ENCODE measurements at regions of chr12 and their contacts with region 1.

Region 1: GRCh38 chr12:12376646-12377448 is 20.0 kb downstream of the BORCS5 start:
- DNase-seq: peak in 7 of 9 donors; percentile 58 to 84 (median 72)
- ATAC-seq: peak; percentile 63
- H3K4me3 ChIP-seq: no peak overlapping the region
- H3K4me3 Mint-ChIP-seq: no peak overlapping the region
- H3K27ac ChIP-seq: no peak overlapping the region
- H3K27ac Mint-ChIP-seq: peak overlapping the region in 6 of 9 donors; percentile 46 to 86 (median 66)
- H3K4me1 ChIP-seq: peaks cover 14 to 42% of the 10 kb centered on the region in 2 donors
- H3K4me1 Mint-ChIP-seq: peaks cover 7 to 50% (median 44%) of the 10 kb centered on the region in 7 donors
- H3K27me3 ChIP-seq: no peaks in the 10 kb centered on the region
- H3K27me3 Mint-ChIP-seq: no peaks in the 10 kb centered on the region

Region 2: GRCh38 chr12:12474931-12475795 is 98.3 kb after region 1 on chr12:
- CTCF ChIA-PET with region 1: interaction called, 4 read pairs
- POLR2A ChIA-PET with region 1: interaction called, 5 read pairs
- intact Hi-C with region 1: loop called (anchors 1 to 2 kb)
- DNase-seq: peak in 3 of 9 donors; percentile 22 to 49 (median 37)
- ATAC-seq: peak; percentile 84
- H3K4me3 ChIP-seq: peak overlapping the region; percentile 7
- H3K4me3 Mint-ChIP-seq: peak overlapping the region in 9 of 10 donors; percentile 11 to 76 (median 43)
- H3K27ac ChIP-seq: peak overlapping the region; percentile 39
- H3K27ac Mint-ChIP-seq: peak overlapping the region; percentile 72 to 95 (median 91)
- H3K4me1 ChIP-seq: peaks cover 7 to 17% of the 10 kb centered on the region in 2 donors
- H3K4me1 Mint-ChIP-seq: peaks cover 10 to 72% (median 42%) of the 10 kb centered on the region in 7 donors
- H3K27me3 ChIP-seq: no peaks in the 10 kb centered on the region
- H3K27me3 Mint-ChIP-seq: no peaks in the 10 kb centered on the region

Region 3: GRCh38 chr12:12611512-12612306 is 234.9 kb after region 1 on chr12 and contains the start of gene CREBL2:
- CTCF ChIA-PET with region 1: interaction called, 4 read pairs
- POLR2A ChIA-PET with region 1: interaction called, 7 read pairs
- intact Hi-C with region 1: loop called in 1 of 2 experiments (anchors 1 kb)
- DNase-seq: peak; percentile 61 to 91 (median 89)
- ATAC-seq: peak; percentile 97
- H3K4me3 ChIP-seq: peak within 1 kb of the TSS; percentile 94
- H3K4me3 Mint-ChIP-seq: peak within 1 kb of the TSS; percentile 84 to 99 (median 93)
- H3K27ac ChIP-seq: peak within 1 kb of the TSS; percentile 98
- H3K27ac Mint-ChIP-seq: peak within 1 kb of the TSS; percentile 91 to 100 (median 99)
- H3K4me1 ChIP-seq: peaks cover 12 to 18% of the 10 kb centered on the region in 2 donors
- H3K4me1 Mint-ChIP-seq: peaks cover 38 to 74% (median 57%) of the 10 kb centered on the region in 7 donors
- H3K27me3 ChIP-seq: no peaks in the 10 kb centered on the region
- H3K27me3 Mint-ChIP-seq: no peaks in the 10 kb centered on the region
- total RNA-seq, gene CREBL2: 17.3 to 39.5 (median 24.9) TPM

Region 4: DNA sequence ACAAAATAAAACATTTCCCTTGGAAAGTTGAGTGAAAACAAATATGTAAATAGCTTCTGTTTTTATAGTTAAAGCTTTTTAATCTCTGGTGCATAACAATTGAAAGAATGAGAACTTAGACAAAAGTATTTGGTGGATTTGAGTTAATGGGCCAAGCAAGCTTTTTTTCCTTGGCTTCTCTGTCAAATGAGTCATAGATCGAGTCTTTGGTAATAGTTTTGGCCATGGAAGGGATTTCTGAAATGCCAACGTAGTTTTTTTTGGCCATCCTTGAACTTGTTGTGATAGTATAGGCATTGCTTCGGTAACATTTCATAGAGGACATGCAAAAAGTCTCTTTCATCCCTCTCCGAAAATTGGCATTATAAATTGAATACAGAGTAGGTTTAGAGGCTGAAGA is 284.2 kb after region 1 on chr12:
- CTCF ChIA-PET with region 1: interaction called, 23 read pairs
- POLR2A ChIA-PET with region 1: interaction called, 9 read pairs
- intact Hi-C with region 1: loop called (anchors 1 kb)
- DNase-seq: no peak
- ATAC-seq: no peak
- H3K4me3 ChIP-seq: no peak overlapping the region
- H3K4me3 Mint-ChIP-seq: no peak overlapping the region
- H3K27ac ChIP-seq: no peak overlapping the region
- H3K27ac Mint-ChIP-seq: peak overlapping the region in 1 of 9 donors; percentile 82
- H3K4me1 ChIP-seq: no peaks in the 10 kb centered on the region
- H3K4me1 Mint-ChIP-seq: peaks cover 0 to 3% (median under 1%) of the 10 kb centered on the region in 7 donors
- H3K27me3 ChIP-seq: no peaks in the 10 kb centered on the region
- H3K27me3 Mint-ChIP-seq: no peaks in the 10 kb centered on the region

Region 5: DNA sequence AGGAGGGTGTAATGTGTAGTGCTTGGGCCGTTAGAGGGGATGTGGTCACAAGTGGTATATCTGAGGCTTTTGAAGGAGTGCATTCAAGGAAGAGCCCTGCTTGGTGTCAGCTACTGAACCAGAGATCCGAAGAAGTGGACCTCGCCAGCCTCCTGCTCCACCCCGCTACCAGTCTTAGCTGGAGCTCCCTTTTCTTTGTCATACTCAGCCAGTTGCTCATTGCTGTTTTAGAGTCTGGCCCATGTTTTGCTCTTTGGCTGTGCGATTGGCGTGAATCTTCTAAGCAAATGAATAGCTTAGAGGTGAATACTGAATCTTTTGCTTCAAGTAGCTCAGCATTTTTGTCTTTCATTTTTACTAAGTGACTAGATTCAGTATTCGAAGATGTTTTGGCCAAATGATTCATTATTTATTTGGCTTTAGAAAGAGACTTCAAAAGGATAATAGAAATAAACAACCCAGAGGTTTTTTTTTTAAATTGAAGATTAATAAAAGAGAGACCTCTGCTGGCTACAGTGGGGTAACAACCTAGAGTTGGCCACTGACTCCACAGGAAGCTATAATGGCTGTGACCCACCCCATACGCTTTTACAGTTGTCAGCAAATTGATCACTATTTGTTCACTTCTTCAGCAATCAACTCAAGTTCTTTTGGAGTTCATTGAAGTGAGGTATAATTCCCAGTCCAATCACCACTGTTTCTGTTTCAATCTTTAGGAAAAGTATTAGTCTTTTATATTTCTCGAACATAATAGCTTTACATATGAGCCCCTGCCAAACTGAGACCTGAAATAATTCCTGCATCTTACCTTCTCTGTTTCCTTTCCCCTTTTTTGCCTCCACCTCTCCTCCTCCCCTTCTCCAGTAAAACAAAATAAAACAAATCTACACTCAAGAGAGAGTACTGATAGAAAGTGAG is 360.2 kb after region 1 on chr12:
- CTCF ChIA-PET with region 1: interaction called, 91 read pairs
- POLR2A ChIA-PET with region 1: interaction called, 10 read pairs
- intact Hi-C with region 1: loop called (anchors 1 kb)
- DNase-seq: peak in 7 of 9 donors; percentile 32 to 59 (median 39)
- ATAC-seq: peak; percentile 93
- H3K4me3 ChIP-seq: peak overlapping the region; percentile 28
- H3K4me3 Mint-ChIP-seq: peak overlapping the region; percentile 53 to 82 (median 68)
- H3K27ac ChIP-seq: peak overlapping the region; percentile 54
- H3K27ac Mint-ChIP-seq: peak overlapping the region; percentile 75 to 93 (median 85)
- H3K4me1 ChIP-seq: peaks cover 9 to 33% of the 10 kb centered on the region in 2 donors
- H3K4me1 Mint-ChIP-seq: peaks cover 21 to 65% (median 35%) of the 10 kb centered on the region in 7 donors
- H3K27me3 ChIP-seq: no peaks in the 10 kb centered on the region
- H3K27me3 Mint-ChIP-seq: no peaks in the 10 kb centered on the region